ENCODE measurements at regions of chr17 and their contacts with region 1.

Region 1: GRCh38 chr17:47941236-47941994 is at the start of gene PNPO:
- DNase-seq: peak; percentile 98 to 99
- H3K4me3 ChIP-seq: peak within 1 kb of the TSS; percentile 73 to 90
- H3K27ac ChIP-seq: peak within 1 kb of the TSS; percentile 75
- H3K4me1 ChIP-seq: peaks cover 22% of the 10 kb centered on the region
- H3K27me3 ChIP-seq: no peaks in the 10 kb centered on the region
- CTCF ChIP-seq: no peak
- POLR2A ChIP-seq: no peak
- total RNA-seq, gene PNPO: 42.7 TPM

Region 2: GRCh38 chr17:47895856-47896671 is 45.4 kb before region 1 on chr17 and contains the start of gene SP2:
- intact Hi-C with region 1: loop called (anchors 10 kb)
- DNase-seq: peak; percentile 100
- H3K4me3 ChIP-seq: peak within 1 kb of the TSS; percentile 81 to 86
- H3K27ac ChIP-seq: peak within 1 kb of the TSS; percentile 99
- H3K4me1 ChIP-seq: peaks cover 31% of the 10 kb centered on the region
- H3K27me3 ChIP-seq: no peaks in the 10 kb centered on the region
- CTCF ChIP-seq: peak in 1 of 3 experiments; percentile 20
- POLR2A ChIP-seq: peak in 1 of 2 donors; percentile 78
- total RNA-seq, gene SP2: 11.3 TPM

Measured in vagina (tissue), 2 donors.